A673 (cell line): ENCODE measurements at regions of chr14 and their contacts with region 1.

Region 1: DNA sequence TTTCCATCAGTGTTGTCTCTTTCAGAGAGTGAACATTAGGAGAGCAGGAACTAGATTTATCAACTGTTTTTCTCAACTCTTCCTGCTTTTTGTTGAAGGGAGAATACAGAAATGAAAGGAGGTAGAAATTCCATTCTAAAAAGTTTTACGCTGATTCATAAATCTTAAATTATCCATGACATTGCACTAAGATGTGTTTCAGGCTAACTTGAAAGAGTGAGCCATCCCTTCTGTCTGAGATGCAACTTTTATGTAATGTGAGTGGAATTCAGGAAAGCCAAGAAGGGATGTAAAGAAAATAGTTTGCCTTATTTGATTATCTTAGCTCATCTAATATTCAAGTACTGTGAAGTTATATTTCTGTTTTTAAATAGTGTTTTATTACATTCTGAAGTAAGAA is 349.5 kb upstream of the RGS6 start:
- DNase-seq: peak; percentile 49
- H3K4me3 ChIP-seq: peak overlapping the region; percentile 8
- H3K27ac ChIP-seq: peak overlapping the region; percentile 73
- H3K4me1 ChIP-seq: peaks cover 83% of the 10 kb centered on the region
- H3K27me3 ChIP-seq: no peaks in the 10 kb centered on the region
- CTCF ChIP-seq: no peak

Region 2: DNA sequence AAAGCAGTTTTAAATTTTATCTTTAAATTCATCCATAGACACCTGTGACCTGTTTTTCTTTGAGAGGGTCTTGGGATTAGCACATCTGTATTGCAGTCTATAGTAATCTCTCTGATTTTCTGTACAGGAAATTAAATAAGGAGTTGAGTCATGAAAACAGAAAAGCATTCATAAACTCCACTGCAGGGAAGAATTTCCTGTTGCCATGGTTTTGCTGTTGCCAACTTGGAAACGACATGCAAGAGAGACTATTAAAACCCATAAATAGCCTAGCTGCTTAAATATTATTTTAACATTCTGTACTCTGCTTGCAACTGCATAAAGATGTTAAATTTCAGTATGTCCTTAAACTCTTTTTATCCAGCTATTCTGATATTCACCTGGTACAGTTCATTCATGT is 68.5 kb after region 1 on chr14:
- CTCF ChIA-PET with region 1: no interaction called
- POLR2A ChIA-PET with region 1: no interaction called
- intact Hi-C with region 1: loop called (anchors 2 kb)
- DNase-seq: peak; percentile 93
- H3K4me3 ChIP-seq: peak overlapping the region; percentile 12
- H3K27ac ChIP-seq: peak overlapping the region; percentile 70
- H3K4me1 ChIP-seq: peaks cover 68% of the 10 kb centered on the region
- H3K27me3 ChIP-seq: no peaks in the 10 kb centered on the region
- CTCF ChIP-seq: no peak